Activated B cell treated with CpG ODN at 0.5 μM for 24 hours (primary cell): ENCODE measurements at regions of chr5 and their contacts with region 1.

Region 1: DNA sequence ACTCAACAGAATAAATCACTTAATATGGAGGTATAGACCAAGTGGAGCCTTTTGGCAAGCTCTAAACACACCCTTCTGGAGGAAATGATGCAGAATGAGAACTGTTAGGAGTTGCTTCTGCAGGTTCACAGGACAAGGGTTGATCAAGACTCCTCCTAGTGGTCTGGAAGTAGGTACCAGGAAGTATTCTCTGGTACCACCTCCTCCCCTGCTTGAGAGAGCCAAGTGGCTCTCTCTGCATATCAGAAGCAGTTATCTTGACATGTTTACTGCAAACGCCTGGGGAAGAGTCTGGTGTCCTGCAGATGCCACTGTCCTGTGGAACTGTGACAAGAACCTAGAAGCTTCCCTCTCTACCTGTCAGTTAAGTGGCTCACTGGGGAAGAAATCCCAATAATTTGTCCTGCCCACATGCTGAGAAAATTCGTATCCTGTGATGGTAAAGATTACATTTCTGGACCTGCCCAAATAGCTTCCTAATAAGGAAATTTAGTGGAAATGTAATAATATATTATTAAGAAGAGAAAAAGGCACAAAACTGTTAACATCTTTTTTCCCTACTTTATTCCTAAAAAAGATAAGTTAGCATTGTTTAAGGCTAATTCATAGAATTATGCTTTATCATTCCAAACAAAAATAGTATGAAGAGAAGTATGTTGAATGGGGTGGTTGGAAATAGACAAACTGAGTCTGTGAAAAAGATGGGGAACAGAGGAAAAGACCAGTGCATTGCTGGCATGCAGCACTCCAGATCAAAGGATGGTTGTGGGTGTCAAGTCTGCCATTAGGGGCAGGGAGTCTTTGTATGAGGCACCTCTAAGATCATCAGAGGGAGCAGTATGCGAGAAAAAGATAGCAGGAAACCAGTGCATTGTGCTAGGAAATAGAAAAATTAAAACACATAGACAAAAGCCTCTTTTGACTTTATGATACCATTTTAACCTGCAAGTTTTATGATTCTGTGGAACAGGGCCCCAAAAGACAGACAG is 118.8 kb downstream of the CDC42SE2 start:
- DNase-seq: no peak
- ATAC-seq: peak; percentile 73
- H3K4me3 Mint-ChIP-seq: peak overlapping the region; percentile 46
- H3K27ac Mint-ChIP-seq: peak overlapping the region; percentile 98
- H3K4me1 Mint-ChIP-seq: peaks cover 55% of the 10 kb centered on the region
- H3K27me3 Mint-ChIP-seq: no peaks in the 10 kb centered on the region
- CTCF ChIP-seq: peak; percentile 71

Region 2: DNA sequence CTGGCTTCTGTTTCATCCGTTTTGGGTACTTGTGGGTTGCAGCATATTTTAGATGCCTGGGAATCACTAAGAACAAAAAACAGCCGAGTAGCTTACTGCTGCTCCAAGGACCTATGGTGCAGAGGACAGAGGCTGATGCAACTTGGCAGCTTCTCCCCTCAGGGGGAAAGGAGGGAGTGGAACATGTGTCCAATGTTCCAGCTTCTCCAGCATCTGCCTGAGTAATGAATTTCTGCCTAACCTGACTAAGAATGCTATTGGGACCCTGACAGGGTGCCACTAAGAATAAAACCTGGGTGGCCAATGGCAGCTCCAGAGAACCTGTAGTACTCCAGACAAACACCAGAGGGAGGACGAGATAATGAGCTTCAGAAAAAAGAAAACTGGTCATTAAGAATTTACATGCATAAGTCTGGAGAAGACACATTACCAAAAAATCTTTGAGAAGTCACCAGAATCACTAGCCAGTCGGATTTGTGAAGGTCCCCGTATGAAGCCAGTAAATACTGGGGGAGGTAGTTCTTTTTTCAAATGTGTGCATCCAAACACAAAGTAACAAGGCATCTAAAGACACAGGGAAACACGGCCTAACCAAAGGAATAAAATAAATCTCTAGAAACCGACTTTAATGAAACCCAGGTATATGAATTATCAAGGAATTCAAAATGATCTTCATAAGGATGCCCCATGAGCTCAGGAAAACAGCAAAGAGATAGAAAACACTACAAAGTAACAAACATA is 511.2 kb before region 1 on chr5:
- CTCF ChIA-PET with region 1: interaction called, 9 read pairs
- POLR2A ChIA-PET with region 1: no interaction called
- intact Hi-C with region 1: loop called (anchors 1 kb)
- DNase-seq: no peak
- ATAC-seq: peak; percentile 56
- H3K4me3 Mint-ChIP-seq: no peak overlapping the region
- H3K27ac Mint-ChIP-seq: no peak overlapping the region
- H3K4me1 Mint-ChIP-seq: no peaks in the 10 kb centered on the region
- H3K27me3 Mint-ChIP-seq: peaks cover under 1% of the 10 kb centered on the region
- CTCF ChIP-seq: no peak

Region 3: DNA sequence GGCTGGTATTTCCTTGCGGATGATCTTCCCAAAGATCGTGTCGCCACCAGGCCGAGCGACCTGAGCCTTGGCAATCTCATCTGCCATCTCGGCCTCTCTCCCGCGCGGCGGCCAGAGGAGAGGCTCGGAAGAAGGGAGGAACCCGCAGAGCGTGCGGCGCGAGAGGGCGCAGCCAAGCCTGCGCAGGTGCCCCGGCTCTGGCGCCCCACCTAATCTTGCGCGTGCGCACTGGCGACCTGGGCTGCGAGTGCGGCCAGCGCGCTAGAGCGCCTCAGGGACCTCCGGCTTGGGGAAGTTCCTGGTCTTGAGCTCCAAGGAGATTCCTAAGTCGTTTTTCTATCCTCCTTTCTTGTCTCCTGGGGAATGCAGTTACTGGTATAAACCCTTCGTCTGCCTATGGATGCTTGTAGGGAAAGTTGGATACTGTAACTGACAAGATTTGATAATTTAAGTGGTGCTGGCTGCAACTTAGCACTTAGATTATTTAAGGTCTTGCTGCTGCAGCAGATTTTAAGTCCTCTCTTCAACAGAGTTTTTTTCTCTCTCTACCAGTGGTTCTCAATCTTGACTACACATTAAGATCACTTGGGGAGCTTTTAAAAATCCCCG is 217.5 kb before region 1 on chr5 and contains the start of gene HINT1:
- CTCF ChIA-PET with region 1: interaction called, 10 read pairs
- POLR2A ChIA-PET with region 1: interaction called, 11 read pairs
- intact Hi-C with region 1: loop called (anchors 1 kb)
- DNase-seq: peak; percentile 91
- ATAC-seq: peak; percentile 83
- H3K4me3 Mint-ChIP-seq: peak within 1 kb of the TSS; percentile 96
- H3K27ac Mint-ChIP-seq: peak within 1 kb of the TSS; percentile 95
- H3K4me1 Mint-ChIP-seq: peaks cover 43% of the 10 kb centered on the region
- H3K27me3 Mint-ChIP-seq: no peaks in the 10 kb centered on the region
- CTCF ChIP-seq: no peak
- total RNA-seq, gene HINT1: 201 and 212 TPM in 2 replicates

Region 4: GRCh38 chr5:131209506-131210150 is 173.1 kb before region 1 on chr5:
- CTCF ChIA-PET with region 1: interaction called, 6 read pairs
- POLR2A ChIA-PET with region 1: interaction called, 16 read pairs
- intact Hi-C with region 1: loop called (anchors 1 kb)
- DNase-seq: peak; percentile 44
- ATAC-seq: peak; percentile 87
- H3K4me3 Mint-ChIP-seq: peak overlapping the region; percentile 82
- H3K27ac Mint-ChIP-seq: peak overlapping the region; percentile 99
- H3K4me1 Mint-ChIP-seq: peaks cover 63% of the 10 kb centered on the region
- H3K27me3 Mint-ChIP-seq: no peaks in the 10 kb centered on the region
- CTCF ChIP-seq: no peak

Region 5: GRCh38 chr5:131263648-131264450 is 118.9 kb before region 1 on chr5 and contains the start of gene CDC42SE2:
- CTCF ChIA-PET with region 1: interaction called, 43 read pairs
- POLR2A ChIA-PET with region 1: interaction called, 190 read pairs
- intact Hi-C with region 1: loop called (anchors 1 kb)
- DNase-seq: peak; percentile 94
- ATAC-seq: peak; percentile 86
- H3K4me3 Mint-ChIP-seq: peak within 1 kb of the TSS; percentile 90
- H3K27ac Mint-ChIP-seq: peak within 1 kb of the TSS; percentile 96
- H3K4me1 Mint-ChIP-seq: peaks cover 45% of the 10 kb centered on the region
- H3K27me3 Mint-ChIP-seq: no peaks in the 10 kb centered on the region
- CTCF ChIP-seq: no peak
- total RNA-seq, gene CDC42SE2: 114 and 122 TPM in 2 replicates

Region 6: GRCh38 chr5:131357739-131358561 is 24.8 kb before region 1 on chr5:
- CTCF ChIA-PET with region 1: interaction called, 5 read pairs
- POLR2A ChIA-PET with region 1: no interaction called
- intact Hi-C with region 1: loop called (anchors 1 kb)
- DNase-seq: no peak
- ATAC-seq: peak; percentile 67
- H3K4me3 Mint-ChIP-seq: peak overlapping the region; percentile 47
- H3K27ac Mint-ChIP-seq: peak overlapping the region; percentile 84
- H3K4me1 Mint-ChIP-seq: peaks cover 47% of the 10 kb centered on the region
- H3K27me3 Mint-ChIP-seq: no peaks in the 10 kb centered on the region
- CTCF ChIP-seq: no peak

Region 7: GRCh38 chr5:131417240-131417869 is 34.7 kb after region 1 on chr5:
- CTCF ChIA-PET with region 1: interaction called, 7 read pairs
- POLR2A ChIA-PET with region 1: no interaction called
- intact Hi-C with region 1: loop called (anchors 1 kb)
- DNase-seq: peak; percentile 56
- ATAC-seq: peak; percentile 61
- H3K4me3 Mint-ChIP-seq: peak overlapping the region; percentile 56
- H3K27ac Mint-ChIP-seq: peak overlapping the region; percentile 15
- H3K4me1 Mint-ChIP-seq: peaks cover 36% of the 10 kb centered on the region
- H3K27me3 Mint-ChIP-seq: no peaks in the 10 kb centered on the region
- CTCF ChIP-seq: peak; percentile 58